H1 (cell line): ENCODE measurements at regions of chr5 and their contacts with region 1.

Region 1: GRCh38 chr5:139293504-139294373 is at the start of gene MATR3:
- DNase-seq: peak; percentile 91 to 95
- H3K4me3 ChIP-seq: peak within 1 kb of the TSS; percentile 83 to 99 (median 95)
- H3K27ac ChIP-seq: peak within 1 kb of the TSS; percentile 98
- H3K4me1 ChIP-seq: peaks cover 0 to 25% (median 7%) of the 10 kb centered on the region in 4 experiments; a peak in 5 of 7 replicates
- H3K27me3 ChIP-seq: no peaks in the 10 kb centered on the region
- CTCF ChIP-seq: no peak
- EP300 ChIP-seq: no peak
- POLR2A ChIP-seq: peak; percentile 97 to 99
- RAD21 ChIP-seq: no peak
- total RNA-seq, gene MATR3: 378 and 389 TPM in 2 replicates

Region 2: GRCh38 chr5:139273572-139274289 is 20.0 kb before region 1 on chr5:
- CTCF ChIA-PET with region 1: interaction called, 10 read pairs
- POLR2A ChIA-PET with region 1: interaction called, 1,766 read pairs
- DNase-seq: peak; percentile 82 to 97
- H3K4me3 ChIP-seq: peak overlapping the region; percentile 90 to 100 (median 95)
- H3K27ac ChIP-seq: peak overlapping the region; percentile 92
- H3K4me1 ChIP-seq: peaks cover 14 to 27% (median 22%) of the 10 kb centered on the region in 4 experiments
- H3K27me3 ChIP-seq: no peaks in the 10 kb centered on the region
- CTCF ChIP-seq: no peak
- EP300 ChIP-seq: 0 out of 3 replicates have a peak, but pooled peaks of 1 of the 2 experiments have one; percentile 5
- POLR2A ChIP-seq: peak; percentile 90 to 95
- RAD21 ChIP-seq: peak in 1 of 2 experiments; percentile 2; a peak in 1 of 4 replicates

Region 3: GRCh38 chr5:139335811-139336210 is 42.1 kb after region 1 on chr5:
- CTCF ChIA-PET with region 1: no interaction called
- POLR2A ChIA-PET with region 1: interaction called, 163 read pairs
- DNase-seq: no peak
- H3K4me3 ChIP-seq: no peak overlapping the region
- H3K27ac ChIP-seq: no peak overlapping the region
- H3K4me1 ChIP-seq: no peaks in the 10 kb centered on the region
- H3K27me3 ChIP-seq: no peaks in the 10 kb centered on the region
- CTCF ChIP-seq: no peak
- EP300 ChIP-seq: no peak
- POLR2A ChIP-seq: peak in 1 of 2 experiments; percentile 19; a peak in 2 of 3 replicates
- RAD21 ChIP-seq: no peak

Region 4: GRCh38 chr5:139358064-139358463 is 64.3 kb after region 1 on chr5:
- CTCF ChIA-PET with region 1: no interaction called
- POLR2A ChIA-PET with region 1: interaction called, 12 read pairs
- DNase-seq: no peak
- H3K4me3 ChIP-seq: no peak overlapping the region
- H3K27ac ChIP-seq: no peak overlapping the region
- H3K4me1 ChIP-seq: no peaks in the 10 kb centered on the region
- H3K27me3 ChIP-seq: no peaks in the 10 kb centered on the region
- CTCF ChIP-seq: no peak
- EP300 ChIP-seq: no peak
- POLR2A ChIP-seq: no peak
- RAD21 ChIP-seq: no peak

Region 5: GRCh38 chr5:139392678-139393496 is 99.1 kb after region 1 on chr5:
- CTCF ChIA-PET with region 1: interaction called, 3 read pairs
- POLR2A ChIA-PET with region 1: interaction called, 25 read pairs
- DNase-seq: peak in 1 of 2 experiments; percentile 94
- H3K4me3 ChIP-seq: peak overlapping the region; percentile 42 to 68 (median 54)
- H3K27ac ChIP-seq: no peak overlapping the region
- H3K4me1 ChIP-seq: peaks cover 3 to 39% (median 21%) of the 10 kb centered on the region in 4 experiments
- H3K27me3 ChIP-seq: peaks cover 14 to 34% (median 28%) of the 10 kb centered on the region in 4 experiments; a peak in 6 of 7 replicates
- CTCF ChIP-seq: peak in 2 of 3 experiments; percentile 74 to 92; a peak in 3 of 4 replicates
- EP300 ChIP-seq: peak in 1 of 2 experiments; percentile 3; a peak in 1 of 3 replicates
- POLR2A ChIP-seq: peak in 1 of 2 experiments; percentile 52; a peak in 2 of 3 replicates
- RAD21 ChIP-seq: peak; percentile 65 to 87

Region 6: GRCh38 chr5:139531772-139532169 is 238.0 kb after region 1 on chr5:
- CTCF ChIA-PET with region 1: no interaction called
- POLR2A ChIA-PET with region 1: no interaction called
- DNase-seq: no peak
- H3K4me3 ChIP-seq: no peak overlapping the region
- H3K27ac ChIP-seq: no peak overlapping the region
- H3K4me1 ChIP-seq: peaks cover 0 to 13% (median 2%) of the 10 kb centered on the region in 4 experiments; a peak in 2 of 7 replicates
- H3K27me3 ChIP-seq: no peaks in the 10 kb centered on the region
- CTCF ChIP-seq: no peak
- EP300 ChIP-seq: no peak
- POLR2A ChIP-seq: no peak
- RAD21 ChIP-seq: no peak